Ascending aorta (tissue), 2 donors: ENCODE measurements at regions of chr11 and their contacts with region 1.

Region 1: DNA sequence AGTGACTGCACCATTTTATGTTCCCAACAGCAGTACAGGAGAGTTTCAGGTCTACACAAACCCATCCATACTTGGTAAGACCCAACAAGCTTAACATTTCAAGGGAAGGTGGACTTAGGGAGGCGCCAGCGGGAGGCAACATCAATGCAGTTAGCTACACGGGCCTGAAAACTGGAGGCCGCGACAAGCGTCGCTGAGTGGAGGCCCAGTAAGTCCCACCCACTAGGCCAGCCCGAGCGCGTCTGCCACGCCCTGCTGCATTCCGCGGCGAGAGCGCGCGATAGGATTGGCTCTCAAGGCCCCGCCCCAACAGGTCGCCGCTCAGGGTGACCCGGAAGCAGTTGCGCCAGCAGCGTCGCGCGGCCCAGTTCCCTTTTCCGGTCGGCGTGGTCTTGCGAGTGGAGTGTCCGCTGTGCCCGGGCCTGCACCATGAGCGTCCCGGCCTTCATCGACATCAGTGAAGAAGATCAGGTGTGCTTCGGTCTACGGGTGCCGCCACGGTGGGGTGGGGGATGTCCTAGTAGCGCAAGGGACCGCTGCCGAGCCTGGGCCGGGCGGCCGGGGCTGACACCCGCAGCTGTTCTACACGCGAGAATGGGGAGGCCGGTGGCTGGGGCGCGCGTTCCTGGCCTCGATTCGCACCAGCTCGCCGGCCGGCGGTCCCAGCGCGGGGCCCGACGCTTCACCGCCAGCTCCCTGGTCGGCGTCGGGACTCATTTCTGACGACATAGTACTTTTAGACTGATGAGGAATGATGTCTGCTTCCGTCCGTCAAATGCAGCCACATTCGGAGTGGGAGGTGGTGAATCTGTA is at the start of gene EIF3M:
- DNase-seq: peak; percentile 82 to 97
- H3K4me3 ChIP-seq: peak within 1 kb of the TSS; percentile 73 to 94
- H3K27ac ChIP-seq: peak within 1 kb of the TSS; percentile 64 to 86
- H3K4me1 ChIP-seq: peaks cover 7 to 9% of the 10 kb centered on the region in 2 donors
- H3K27me3 ChIP-seq: no peaks in the 10 kb centered on the region
- CTCF ChIP-seq: no peak
- total RNA-seq, gene EIF3M: 149 TPM

Region 2: DNA sequence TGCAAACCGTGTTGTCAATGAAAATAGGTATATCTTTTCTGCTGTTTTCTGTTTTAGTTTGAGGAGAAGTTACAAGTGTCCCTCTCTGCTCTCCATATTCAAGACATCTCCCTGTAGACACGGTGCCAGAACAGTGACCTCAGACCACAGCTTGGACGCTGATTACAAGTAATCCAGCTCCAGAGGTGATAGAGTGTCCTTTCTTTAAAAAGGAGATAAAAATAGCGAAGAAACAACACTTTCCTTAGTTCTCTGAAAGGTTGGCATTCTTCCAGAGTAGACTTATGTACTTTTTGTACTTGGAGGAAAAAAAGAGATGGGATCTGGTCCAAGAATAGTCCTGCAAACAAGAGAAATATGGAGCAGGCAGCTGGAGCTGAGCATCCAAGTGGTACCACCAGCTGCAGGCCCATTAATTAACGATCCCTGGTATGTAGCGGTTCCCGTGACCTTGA is 105.4 kb before region 1 on chr11:
- intact Hi-C with region 1: no loop called
- DNase-seq: no peak
- H3K4me3 ChIP-seq: no peak overlapping the region
- H3K27ac ChIP-seq: no peak overlapping the region
- H3K4me1 ChIP-seq: no peaks in the 10 kb centered on the region
- H3K27me3 ChIP-seq: no peaks in the 10 kb centered on the region
- CTCF ChIP-seq: no peak

Region 3: DNA sequence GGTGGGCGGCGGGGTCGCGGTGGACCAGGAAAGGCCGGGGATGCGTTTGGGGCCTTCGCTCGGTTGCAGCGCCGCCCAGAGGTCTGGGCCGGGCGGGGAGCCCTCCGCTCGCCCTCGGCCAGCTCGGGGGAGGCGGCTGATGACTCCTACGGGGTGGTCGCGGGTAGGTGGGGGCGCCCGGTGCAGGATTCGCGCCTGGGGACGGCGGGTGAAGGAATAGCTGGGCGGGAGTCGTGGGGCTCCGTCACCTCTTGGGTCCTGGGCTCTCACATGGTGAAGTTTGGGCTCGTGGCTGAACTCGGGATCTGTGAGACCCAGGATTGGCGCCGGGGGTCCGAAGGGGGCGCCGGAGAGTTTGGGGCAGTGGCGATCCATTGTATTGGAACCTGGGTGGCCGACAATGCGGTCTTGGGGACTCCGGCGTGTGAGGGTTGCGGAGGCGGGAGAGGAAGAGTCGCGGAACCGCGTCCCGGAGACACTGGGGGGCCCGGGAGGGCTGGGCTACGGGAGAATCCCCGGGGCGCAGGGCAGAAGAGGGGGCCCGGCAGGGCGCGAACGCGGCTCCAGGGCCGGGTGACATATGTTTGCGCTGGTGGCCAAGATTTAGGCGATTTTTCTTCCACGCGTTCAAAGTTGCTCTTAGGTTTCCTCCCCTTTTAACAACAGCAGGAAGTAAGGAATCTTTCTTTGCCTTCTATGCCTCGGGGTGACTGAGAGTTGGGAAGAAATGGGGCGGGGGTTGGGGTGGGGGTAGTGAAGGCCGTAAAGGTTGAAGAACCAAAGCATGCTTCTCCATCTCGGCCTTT is 309.9 kb after region 1 on chr11:
- intact Hi-C with region 1: loop called (anchors 5 kb)
- DNase-seq: peak in 1 of 2 donors; percentile 66
- H3K4me3 ChIP-seq: peak overlapping the region; percentile 84 to 85
- H3K27ac ChIP-seq: peak overlapping the region; percentile 83 to 87
- H3K4me1 ChIP-seq: no peaks in the 10 kb centered on the region
- H3K27me3 ChIP-seq: no peaks in the 10 kb centered on the region
- CTCF ChIP-seq: peak in 2 of 3 experiments; percentile 55 to 69

Region 4: DNA sequence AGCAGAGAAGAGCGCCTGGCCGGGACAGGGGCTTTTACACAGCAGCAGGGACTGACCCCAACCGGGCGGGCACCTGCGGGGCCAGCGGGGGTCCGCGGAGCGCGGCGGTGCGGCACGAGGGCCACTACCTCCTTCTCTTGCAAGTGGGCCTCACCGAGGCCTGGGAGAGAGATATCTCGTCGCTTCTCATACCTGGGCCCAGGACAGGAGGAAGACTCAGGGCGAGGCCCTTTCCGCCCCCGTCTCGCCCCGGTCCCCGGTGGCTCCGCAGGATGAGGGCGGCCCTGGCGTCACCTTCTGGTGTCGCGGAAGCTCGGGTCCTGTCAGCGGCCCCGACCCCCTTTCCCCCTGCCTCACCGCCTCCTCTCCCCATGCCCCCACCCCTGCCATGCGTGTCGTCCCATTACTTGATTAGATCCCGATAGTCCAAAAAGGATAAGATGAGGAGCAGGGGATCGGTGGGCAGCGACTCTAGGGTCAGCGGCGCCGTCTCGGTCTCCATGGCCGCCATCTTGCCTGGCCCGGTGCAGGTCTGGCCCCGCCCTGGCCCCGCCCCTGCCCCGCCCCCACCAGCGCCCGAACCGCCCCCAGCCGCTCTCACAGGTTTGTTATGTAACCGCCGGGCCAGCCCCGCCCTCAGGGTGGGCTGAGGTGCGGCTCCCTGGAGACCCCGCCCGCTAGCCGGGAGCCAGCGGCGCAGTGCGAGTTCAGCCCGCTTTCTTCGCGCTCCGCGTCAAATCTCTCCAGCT is 1190.5 kb after region 1 on chr11 and contains the start of gene FBXO3:
- intact Hi-C with region 1: loop called (anchors 10 kb)
- DNase-seq: peak; percentile 61 to 93
- H3K4me3 ChIP-seq: peak within 1 kb of the TSS; percentile 85 to 90
- H3K27ac ChIP-seq: peak within 1 kb of the TSS; percentile 87 to 89
- H3K4me1 ChIP-seq: peaks cover 7 to 26% of the 10 kb centered on the region in 2 donors
- H3K27me3 ChIP-seq: no peaks in the 10 kb centered on the region
- CTCF ChIP-seq: no peak
- total RNA-seq, gene FBXO3: 11.8 TPM